A549 (cell line): ENCODE measurements at regions of chr16 and their contacts with region 1.

Region 1: GRCh38 chr16:31142109-31143010 is 6.8 kb upstream of the PRSS8 start:
- DNase-seq: peak; percentile 97 to 99
- ATAC-seq: peak; percentile 82 to 89
- H3K4me3 ChIP-seq: peak overlapping the region; percentile 50
- H3K27ac ChIP-seq: peak overlapping the region; percentile 90 to 95
- H3K4me1 ChIP-seq: peaks cover 30% of the 10 kb centered on the region
- CTCF ChIP-seq: peak; percentile 96
- EP300 ChIP-seq: no peak
- POLR2A ChIP-seq: peak; percentile 52
- RAD21 ChIP-seq: peak; percentile 69 to 88

Region 2: DNA sequence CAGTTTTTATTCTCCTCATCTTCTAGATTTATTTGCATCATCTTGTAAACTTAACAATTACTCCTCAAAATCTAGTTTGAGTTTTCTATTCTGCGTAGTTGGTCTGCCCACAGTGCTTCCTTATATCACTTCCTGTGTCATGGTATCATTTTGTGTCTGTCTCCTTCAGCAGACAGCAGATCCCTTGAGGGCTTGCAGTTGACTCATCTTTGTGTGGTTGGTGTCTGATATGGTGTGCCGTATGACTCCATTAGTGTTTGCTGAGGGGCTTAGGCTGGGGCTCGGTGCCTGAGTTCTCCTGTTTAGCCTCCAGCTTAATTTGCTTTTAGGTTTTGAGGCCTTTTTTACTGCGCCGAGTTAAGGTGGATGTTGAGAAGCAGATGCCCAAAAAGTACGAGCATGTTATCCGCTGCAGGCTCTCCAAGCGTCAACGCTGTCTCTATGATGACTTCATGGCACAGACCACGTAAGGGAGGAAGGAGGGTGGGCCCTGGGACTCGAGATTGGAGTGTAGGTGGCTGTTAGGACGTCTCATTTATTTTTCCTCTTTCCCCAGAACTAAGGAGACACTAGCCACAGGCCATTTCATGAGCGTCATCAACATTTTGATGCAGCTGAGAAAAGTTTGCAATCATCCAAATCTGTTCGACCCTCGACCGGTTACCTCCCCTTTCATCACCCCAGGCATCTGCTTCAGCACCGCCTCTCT is 426.5 kb before region 1 on chr16:
- CTCF ChIA-PET with region 1: no interaction called
- POLR2A ChIA-PET with region 1: no interaction called
- DNase-seq: peak in 1 of 2 experiments; percentile 27
- ATAC-seq: peak in 1 of 2 experiments; percentile 38; a peak in 2 of 6 replicates
- H3K4me3 ChIP-seq: no peak overlapping the region
- H3K27ac ChIP-seq: no peak overlapping the region
- H3K4me1 ChIP-seq: peaks cover 13% of the 10 kb centered on the region
- CTCF ChIP-seq: no peak
- EP300 ChIP-seq: no peak
- POLR2A ChIP-seq: no peak
- RAD21 ChIP-seq: no peak

Region 3: GRCh38 chr16:30922960-30923535 is 219.3 kb before region 1 on chr16:
- CTCF ChIA-PET with region 1: no interaction called
- POLR2A ChIA-PET with region 1: no interaction called
- DNase-seq: peak; percentile 97 to 99
- ATAC-seq: peak; percentile 78 to 89
- H3K4me3 ChIP-seq: peak overlapping the region; percentile 87
- H3K27ac ChIP-seq: peak overlapping the region; percentile 99
- H3K4me1 ChIP-seq: peaks cover 15% of the 10 kb centered on the region; the same call in 2 of the 3 replicates
- CTCF ChIP-seq: no peak
- EP300 ChIP-seq: no peak
- POLR2A ChIP-seq: peak; percentile 67
- RAD21 ChIP-seq: no peak

Region 4: GRCh38 chr16:31073968-31074813 is 68.2 kb before region 1 on chr16 and contains the starts of genes ZNF646 and ZNF668:
- CTCF ChIA-PET with region 1: interaction called, 5 read pairs
- POLR2A ChIA-PET with region 1: interaction called, 23 read pairs
- DNase-seq: peak; percentile 99 to 100
- ATAC-seq: peak; percentile 91 to 92
- H3K4me3 ChIP-seq: peak within 1 kb of the TSS; percentile 90
- H3K27ac ChIP-seq: peak within 1 kb of the TSS; percentile 98
- H3K4me1 ChIP-seq: peaks cover 19% of the 10 kb centered on the region
- CTCF ChIP-seq: no peak
- EP300 ChIP-seq: no peak
- POLR2A ChIP-seq: peak; percentile 69
- RAD21 ChIP-seq: no peak
- polyA plus RNA-seq, gene ZNF646: 3.0 and 4.3 TPM in 2 replicates
- polyA plus RNA-seq, gene ZNF668: 3.9 and 4.7 TPM in 2 replicates

Region 5: GRCh38 chr16:31099860-31100638 is 42.3 kb before region 1 on chr16:
- CTCF ChIA-PET with region 1: interaction called, 28 read pairs
- POLR2A ChIA-PET with region 1: no interaction called
- DNase-seq: no peak
- ATAC-seq: peak in 1 of 2 experiments; percentile 10; a peak in 2 of 6 replicates
- H3K4me3 ChIP-seq: no peak overlapping the region
- H3K27ac ChIP-seq: no peak overlapping the region
- H3K4me1 ChIP-seq: no peaks in the 10 kb centered on the region
- CTCF ChIP-seq: no peak
- EP300 ChIP-seq: no peak
- POLR2A ChIP-seq: no peak
- RAD21 ChIP-seq: no peak

Region 6: GRCh38 chr16:31128711-31129567 is 13.4 kb before region 1 on chr16:
- CTCF ChIA-PET with region 1: interaction called, 166 read pairs
- POLR2A ChIA-PET with region 1: interaction called, 9 read pairs
- DNase-seq: no peak
- ATAC-seq: no peak
- H3K4me3 ChIP-seq: no peak overlapping the region
- H3K27ac ChIP-seq: no peak overlapping the region
- H3K4me1 ChIP-seq: peaks cover 2% of the 10 kb centered on the region; the same call in 1 of the 3 replicates
- CTCF ChIP-seq: no peak
- EP300 ChIP-seq: no peak
- POLR2A ChIP-seq: no peak
- RAD21 ChIP-seq: no peak

Region 7: DNA sequence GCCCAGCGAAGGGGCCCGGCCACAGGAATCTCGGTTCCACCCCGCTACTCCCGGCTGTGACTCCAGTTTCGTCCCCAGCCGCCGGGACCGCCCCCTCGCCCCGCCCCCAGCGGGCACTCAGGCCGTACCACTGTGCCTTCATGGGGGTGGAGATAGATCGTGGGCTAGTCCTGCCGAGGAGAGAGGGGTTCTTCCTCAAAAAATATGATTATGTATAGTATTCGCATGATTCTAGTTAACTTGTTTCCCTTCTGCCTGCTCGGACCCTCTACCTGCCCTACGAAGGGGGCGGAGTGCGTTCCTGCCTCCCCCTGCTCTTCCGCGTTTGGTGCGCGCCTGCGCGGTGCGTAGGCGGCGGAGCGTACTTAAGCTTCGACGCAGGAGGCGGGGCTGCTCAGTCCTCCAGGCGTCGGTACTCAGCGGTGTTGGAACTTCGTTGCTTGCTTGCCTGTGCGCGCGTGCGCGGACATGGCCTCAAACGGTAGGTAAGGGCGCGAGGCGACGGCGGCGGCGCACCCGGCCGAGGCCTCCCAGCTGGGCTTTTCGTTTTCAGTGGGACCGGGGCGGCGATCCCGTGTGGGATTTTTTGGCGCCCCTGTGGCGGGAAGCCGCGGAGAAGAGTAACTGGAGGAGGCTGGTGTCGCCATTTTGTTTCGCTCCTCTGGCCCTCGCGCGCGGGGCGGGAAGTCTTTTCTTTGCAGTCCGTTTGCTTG is 37.5 kb after region 1 on chr16 and contains the start of gene FUS:
- CTCF ChIA-PET with region 1: interaction called, 13 read pairs
- POLR2A ChIA-PET with region 1: interaction called, 37 read pairs
- DNase-seq: peak; percentile 91 to 93
- ATAC-seq: peak; percentile 75 to 77
- H3K4me3 ChIP-seq: peak within 1 kb of the TSS; percentile 68
- H3K27ac ChIP-seq: peak within 1 kb of the TSS; percentile 92 to 97
- H3K4me1 ChIP-seq: peaks cover 29% of the 10 kb centered on the region
- CTCF ChIP-seq: no peak
- EP300 ChIP-seq: no peak
- POLR2A ChIP-seq: peak; percentile 100
- RAD21 ChIP-seq: no peak
- polyA plus RNA-seq, gene FUS: 168 and 224 TPM in 2 replicates